GM12878 (cell line): ENCODE measurements at regions of chr21 and their contacts with region 1.

Region 1: DNA sequence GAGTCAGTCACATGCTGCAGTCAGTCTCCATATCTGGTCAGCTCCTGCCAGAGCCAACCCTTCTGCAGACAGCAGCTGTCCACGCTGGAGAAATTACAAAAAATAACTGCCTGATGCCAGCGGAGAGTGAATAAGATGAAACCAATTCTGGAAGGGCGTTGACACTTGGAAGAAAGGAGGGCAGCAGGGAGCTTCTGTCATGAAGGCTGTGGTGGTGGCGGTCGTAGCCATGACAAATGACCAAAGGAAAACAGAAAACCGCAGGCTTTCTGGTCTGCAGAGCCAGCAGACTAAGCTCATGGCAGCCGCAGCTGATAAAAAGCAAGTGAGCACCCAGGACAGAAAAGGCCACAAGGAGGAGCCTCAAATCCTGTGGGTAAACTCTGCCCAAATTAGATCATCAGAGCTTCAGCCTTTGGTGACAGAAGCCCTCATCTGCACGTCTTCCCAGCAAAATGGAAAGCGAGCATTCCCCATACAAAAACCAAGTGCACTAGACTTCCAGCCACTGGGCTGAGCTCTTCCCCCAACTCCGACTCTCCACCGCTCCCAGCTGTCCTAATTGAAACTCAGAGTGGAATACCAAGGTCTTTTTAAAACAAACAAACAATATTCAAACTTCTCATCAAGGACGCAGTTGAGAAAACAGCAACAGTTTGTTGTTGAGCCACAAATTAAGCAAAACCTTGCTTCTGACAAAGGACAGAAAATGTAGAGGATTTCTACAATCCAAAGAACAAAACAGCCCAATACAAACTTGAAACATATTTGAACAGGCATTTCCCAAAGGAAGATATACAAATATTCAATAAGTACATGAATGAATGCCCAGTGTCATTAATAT is 28.7 kb downstream of the RSPH1 start:
- DNase-seq: no peak
- ATAC-seq: peak; percentile 42
- H3K4me3 ChIP-seq: no peak overlapping the region
- H3K27ac ChIP-seq: no peak overlapping the region
- H3K4me1 ChIP-seq: peaks cover 60% of the 10 kb centered on the region
- H3K27me3 ChIP-seq: no peaks in the 10 kb centered on the region
- CTCF ChIP-seq: peak; percentile 46 to 56 (median 49); a peak in 5 of 6 replicates
- EP300 ChIP-seq: peak; percentile 34 to 54; a peak in 1 of 4 replicates
- POLR2A ChIP-seq: no peak
- RAD21 ChIP-seq: peak; percentile 56

Region 2: GRCh38 chr21:42513985-42514882 is 46.9 kb after region 1 on chr21:
- CTCF ChIA-PET with region 1: interaction called, 25 read pairs
- POLR2A ChIA-PET with region 1: interaction called, 7 read pairs
- RAD21 ChIA-PET with region 1: interaction called, 29 read pairs
- SMC1A ChIA-PET with region 1: interaction called, 44 read pairs
- in situ Hi-C with region 1: no loop called
- intact Hi-C with region 1: no loop called
- DNase-seq: no peak
- ATAC-seq: peak; percentile 84
- H3K4me3 ChIP-seq: peak overlapping the region; percentile 94
- H3K27ac ChIP-seq: peak overlapping the region; percentile 41
- H3K4me1 ChIP-seq: peaks cover 11% of the 10 kb centered on the region
- H3K27me3 ChIP-seq: no peaks in the 10 kb centered on the region
- CTCF ChIP-seq: no peak
- EP300 ChIP-seq: no peak; a peak in 1 of 4 replicates
- POLR2A ChIP-seq: peak; percentile 80
- RAD21 ChIP-seq: no peak